ENCODE measurements at regions of chr15 and their contacts with region 1.

Region 1: GRCh38 chr15:34439878-34440277 is 2.3 kb upstream of the GOLGA8A start:
- DNase-seq: no peak
- ATAC-seq: no peak
- H3K4me3 ChIP-seq: no peak overlapping the region
- H3K27ac ChIP-seq: no peak overlapping the region
- H3K4me1 ChIP-seq: peaks cover 13% of the 10 kb centered on the region
- H3K27me3 ChIP-seq: no peaks in the 10 kb centered on the region
- CTCF ChIP-seq: no peak

Region 2: GRCh38 chr15:34501131-34501530 is 61.3 kb after region 1 on chr15:
- intact Hi-C with region 1: loop called in 1 of 2 experiments (anchors 10 kb)
- DNase-seq: no peak
- ATAC-seq: no peak
- H3K4me3 ChIP-seq: no peak overlapping the region
- H3K27ac ChIP-seq: no peak overlapping the region
- H3K4me1 ChIP-seq: no peaks in the 10 kb centered on the region
- H3K27me3 ChIP-seq: peaks cover 0 to 36% (median 4%) of the 10 kb centered on the region in 3 donors
- CTCF ChIP-seq: no peak

Region 3: DNA sequence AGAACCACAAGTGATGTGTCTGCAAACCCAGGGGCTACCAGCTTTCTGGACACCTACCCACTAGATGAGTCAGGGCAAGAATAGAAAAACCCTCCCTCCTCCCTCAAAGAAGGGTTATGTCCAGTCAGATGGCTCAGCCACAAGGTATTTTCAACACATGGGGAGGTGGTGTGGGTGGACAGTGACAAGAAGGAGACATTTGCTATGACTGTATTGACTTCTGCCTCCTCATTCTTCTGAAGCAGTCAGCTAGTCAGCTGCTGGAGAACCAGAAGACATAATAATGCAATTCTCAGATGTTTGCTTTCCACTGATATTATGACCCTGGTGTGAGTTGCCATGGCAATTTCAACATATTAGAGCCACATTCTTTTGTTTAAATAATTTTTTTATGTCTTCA is 210.3 kb after region 1 on chr15:
- intact Hi-C with region 1: no loop called
- DNase-seq: no peak
- ATAC-seq: no peak
- H3K4me3 ChIP-seq: no peak overlapping the region
- H3K27ac ChIP-seq: no peak overlapping the region
- H3K4me1 ChIP-seq: no peaks in the 10 kb centered on the region
- H3K27me3 ChIP-seq: no peaks in the 10 kb centered on the region
- CTCF ChIP-seq: no peak

Measured in psoas muscle (tissue), 8 donors.